Vagina (tissue), 2 donors: ENCODE measurements at regions of chr3 and their contacts with region 1.

Region 1: GRCh38 chr3:66428733-66429132 is 72.1 kb downstream of the LRIG1 start:
- DNase-seq: peak in 1 of 2 donors; percentile 95
- H3K4me3 ChIP-seq: peak overlapping the region in 1 of 2 donors; percentile 1
- H3K27ac ChIP-seq: peak overlapping the region; percentile 72
- H3K4me1 ChIP-seq: peaks cover 71% of the 10 kb centered on the region
- H3K27me3 ChIP-seq: no peaks in the 10 kb centered on the region
- CTCF ChIP-seq: no peak
- POLR2A ChIP-seq: no peak

Region 2: GRCh38 chr3:66386925-66387650 is 41.6 kb before region 1 on chr3:
- intact Hi-C with region 1: no loop called
- DNase-seq: peak; percentile 44 to 55
- H3K4me3 ChIP-seq: no peak overlapping the region
- H3K27ac ChIP-seq: no peak overlapping the region
- H3K4me1 ChIP-seq: no peaks in the 10 kb centered on the region
- H3K27me3 ChIP-seq: no peaks in the 10 kb centered on the region
- CTCF ChIP-seq: no peak
- POLR2A ChIP-seq: no peak

Region 3: DNA sequence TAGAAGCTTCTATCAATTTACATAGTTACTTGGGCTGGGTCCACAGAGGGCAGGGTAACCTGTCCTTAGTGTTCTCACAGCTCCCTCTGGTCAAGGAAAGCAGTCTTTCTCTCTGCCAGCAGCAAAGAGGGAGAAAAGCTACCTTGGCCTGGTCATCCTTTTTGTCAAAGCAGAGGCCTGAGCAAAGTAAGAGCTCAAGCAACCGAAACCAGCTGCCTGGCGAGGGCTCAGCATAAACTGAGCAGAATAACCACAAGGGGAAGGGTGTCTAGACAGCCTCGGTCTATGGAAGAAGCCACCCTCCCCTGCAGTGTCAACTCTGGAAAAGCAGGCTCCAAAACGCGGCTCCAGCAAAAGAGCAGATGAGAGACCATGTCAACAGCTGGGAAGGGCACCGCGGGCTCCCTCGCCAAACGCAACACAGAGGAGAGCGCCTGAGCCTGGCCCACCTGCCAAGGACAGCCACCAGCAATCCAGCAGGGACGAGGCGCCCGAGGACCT is 54.7 kb after region 1 on chr3:
- intact Hi-C with region 1: loop called (anchors 10 kb)
- DNase-seq: no peak
- H3K4me3 ChIP-seq: peak overlapping the region in 1 of 2 donors; percentile 4
- H3K27ac ChIP-seq: peak overlapping the region; percentile 86
- H3K4me1 ChIP-seq: peaks cover 88% of the 10 kb centered on the region
- H3K27me3 ChIP-seq: no peaks in the 10 kb centered on the region
- CTCF ChIP-seq: no peak
- POLR2A ChIP-seq: no peak

Region 4: GRCh38 chr3:66593964-66594363 is 165.2 kb after region 1 on chr3:
- intact Hi-C with region 1: no loop called
- DNase-seq: no peak
- H3K4me3 ChIP-seq: no peak overlapping the region
- H3K27ac ChIP-seq: no peak overlapping the region
- H3K4me1 ChIP-seq: no peaks in the 10 kb centered on the region
- H3K27me3 ChIP-seq: no peaks in the 10 kb centered on the region
- CTCF ChIP-seq: no peak
- POLR2A ChIP-seq: no peak